Naive thymus-derived CD4-positive, alpha-beta T cell (primary cell): ENCODE measurements at regions of chr15 and their contacts with region 1.

Region 1: DNA sequence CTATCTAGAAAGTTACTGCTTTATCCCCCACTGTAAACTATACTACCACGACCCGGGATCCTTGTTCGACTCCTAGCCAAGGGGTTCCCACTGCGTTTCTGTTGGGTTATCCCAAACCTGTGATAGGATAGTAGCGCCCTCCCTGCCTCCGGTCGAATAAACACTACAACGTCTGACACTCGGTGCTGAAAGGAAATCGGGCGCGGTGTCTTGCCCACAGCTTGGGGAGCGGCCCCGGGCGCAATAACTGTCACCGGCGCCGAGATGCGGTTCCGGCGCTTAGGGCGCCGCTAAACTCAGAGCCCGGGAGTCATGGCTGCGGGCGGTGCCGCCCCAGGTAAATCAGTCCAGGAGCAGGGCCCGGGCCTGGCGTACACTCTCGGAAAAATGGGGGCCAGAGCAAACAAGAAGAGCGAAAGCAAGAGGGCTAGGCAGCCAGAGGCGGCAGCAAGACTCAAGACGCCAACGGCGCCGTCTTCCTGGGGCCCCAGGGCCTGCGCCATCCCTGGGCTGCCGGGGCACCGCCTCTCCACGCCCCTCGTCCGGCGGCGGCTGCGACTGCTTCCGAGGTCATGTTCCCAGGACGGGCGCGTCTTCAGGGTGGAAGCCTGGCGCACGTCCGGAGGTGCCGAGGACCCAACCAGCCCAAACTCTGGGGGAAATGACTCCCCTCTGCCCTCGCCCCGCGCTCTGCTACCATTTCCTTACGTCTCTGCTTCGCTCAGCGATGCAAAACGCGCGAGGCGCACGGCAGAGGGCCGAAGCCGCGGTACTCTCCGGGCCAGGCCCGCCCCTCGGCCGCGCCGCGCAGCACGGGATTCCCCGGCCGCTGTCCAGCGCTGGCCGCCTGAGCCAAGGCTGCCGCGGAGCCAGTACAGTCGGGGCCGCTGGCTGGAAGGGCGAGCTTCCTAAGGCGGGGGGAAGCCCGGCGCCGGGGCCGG is at the start of gene DUT:
- DNase-seq: peak; percentile 65 to 85 (median 79)
- ATAC-seq: peak; percentile 87
- H3K4me3 ChIP-seq: peak within 1 kb of the TSS; percentile 87
- H3K4me3 Mint-ChIP-seq: peak within 1 kb of the TSS; percentile 94 to 100 (median 98)
- H3K27ac ChIP-seq: peak within 1 kb of the TSS; percentile 93
- H3K27ac Mint-ChIP-seq: peak within 1 kb of the TSS; percentile 94 to 100 (median 99)
- H3K4me1 ChIP-seq: peaks cover 12 to 13% of the 10 kb centered on the region in 2 donors
- H3K4me1 Mint-ChIP-seq: peaks cover 13 to 46% (median 24%) of the 10 kb centered on the region in 7 donors
- H3K27me3 ChIP-seq: no peaks in the 10 kb centered on the region
- H3K27me3 Mint-ChIP-seq: peaks cover 0 to 2% (median 0%) of the 10 kb centered on the region in 5 donors
- total RNA-seq, gene DUT: 54.7 to 219 (median 116) TPM

Region 2: GRCh38 chr15:48177766-48178647 is 153.1 kb before region 1 on chr15 and contains the start of gene MYEF2:
- CTCF ChIA-PET with region 1: no interaction called
- POLR2A ChIA-PET with region 1: no interaction called
- intact Hi-C with region 1: loop called (anchors 5 kb)
- DNase-seq: peak; percentile 35 to 70 (median 60)
- ATAC-seq: peak; percentile 80
- H3K4me3 ChIP-seq: peak within 1 kb of the TSS; percentile 68
- H3K4me3 Mint-ChIP-seq: peak within 1 kb of the TSS; percentile 89 to 96 (median 92)
- H3K27ac ChIP-seq: peak within 1 kb of the TSS; percentile 65
- H3K27ac Mint-ChIP-seq: peak within 1 kb of the TSS; percentile 63 to 96 (median 87)
- H3K4me1 ChIP-seq: no peaks in the 10 kb centered on the region
- H3K4me1 Mint-ChIP-seq: peaks cover 8 to 35% (median 16%) of the 10 kb centered on the region in 7 donors
- H3K27me3 ChIP-seq: no peaks in the 10 kb centered on the region
- H3K27me3 Mint-ChIP-seq: peaks cover 20 to 28% (median 23%) of the 10 kb centered on the region in 5 donors
- total RNA-seq, gene MYEF2: 16.4 to 29.1 (median 17.8) TPM

Region 3: GRCh38 chr15:48352474-48353072 is 21.4 kb after region 1 on chr15:
- CTCF ChIA-PET with region 1: interaction called, 7 read pairs
- POLR2A ChIA-PET with region 1: interaction called, 3 read pairs
- intact Hi-C with region 1: loop called in 1 of 2 experiments (anchors 1 kb)
- DNase-seq: peak in 8 of 9 donors; percentile 23 to 57 (median 42)
- ATAC-seq: peak; percentile 83
- H3K4me3 ChIP-seq: no peak overlapping the region
- H3K4me3 Mint-ChIP-seq: peak overlapping the region in 3 of 10 donors; percentile 23 to 61 (median 26)
- H3K27ac ChIP-seq: no peak overlapping the region
- H3K27ac Mint-ChIP-seq: no peak overlapping the region
- H3K4me1 ChIP-seq: no peaks in the 10 kb centered on the region
- H3K4me1 Mint-ChIP-seq: peaks cover 0 to 5% (median 4%) of the 10 kb centered on the region in 7 donors
- H3K27me3 ChIP-seq: no peaks in the 10 kb centered on the region
- H3K27me3 Mint-ChIP-seq: peaks cover 0 to 7% (median 2%) of the 10 kb centered on the region in 5 donors

Region 4: GRCh38 chr15:48963524-48964113 is 632.5 kb after region 1 on chr15 and contains the start of gene SHC4:
- CTCF ChIA-PET with region 1: no interaction called
- POLR2A ChIA-PET with region 1: no interaction called
- intact Hi-C with region 1: loop called in 1 of 2 experiments (anchors 10 kb)
- DNase-seq: peak in 4 of 9 donors; percentile 21 to 37 (median 32)
- ATAC-seq: peak; percentile 64
- H3K4me3 ChIP-seq: peak within 1 kb of the TSS; percentile 58
- H3K4me3 Mint-ChIP-seq: peak within 1 kb of the TSS; percentile 68 to 91 (median 84)
- H3K27ac ChIP-seq: no peak within 1 kb of the TSS
- H3K27ac Mint-ChIP-seq: peak within 1 kb of the TSS in 3 of 9 donors; percentile 41 to 68 (median 56)
- H3K4me1 ChIP-seq: peaks cover 17 to 23% of the 10 kb centered on the region in 2 donors
- H3K4me1 Mint-ChIP-seq: peaks cover 15 to 41% (median 21%) of the 10 kb centered on the region in 7 donors
- H3K27me3 ChIP-seq: peaks cover 0 to 18% of the 10 kb centered on the region in 2 donors
- H3K27me3 Mint-ChIP-seq: peaks cover 13 to 65% (median 44%) of the 10 kb centered on the region in 5 donors
- total RNA-seq, gene SHC4: 1.2 TPM in 1 of 5 experiments, not detected in the others

Region 5: GRCh38 chr15:49169880-49170597 is 838.9 kb after region 1 on chr15 and contains the start of gene GALK2:
- CTCF ChIA-PET with region 1: no interaction called
- POLR2A ChIA-PET with region 1: interaction called, 3 read pairs
- intact Hi-C with region 1: loop called in 1 of 2 experiments (anchors 5 kb)
- DNase-seq: peak; percentile 42 to 90 (median 75)
- ATAC-seq: peak; percentile 96
- H3K4me3 ChIP-seq: peak within 1 kb of the TSS; percentile 88
- H3K4me3 Mint-ChIP-seq: peak within 1 kb of the TSS; percentile 91 to 100 (median 98)
- H3K27ac ChIP-seq: peak within 1 kb of the TSS; percentile 88
- H3K27ac Mint-ChIP-seq: peak within 1 kb of the TSS; percentile 94 to 99 (median 98)
- H3K4me1 ChIP-seq: peaks cover 4 to 14% of the 10 kb centered on the region in 2 donors
- H3K4me1 Mint-ChIP-seq: peaks cover 24 to 56% (median 46%) of the 10 kb centered on the region in 7 donors
- H3K27me3 ChIP-seq: no peaks in the 10 kb centered on the region
- H3K27me3 Mint-ChIP-seq: no peaks in the 10 kb centered on the region
- total RNA-seq, gene GALK2: 19.4 to 36.6 (median 28.7) TPM